ENCODE measurements at regions of chr18 and their contacts with region 1.

Region 1: GRCh38 chr18:35580701-35581539 is 620 bp upstream of the GALNT1 start:
- DNase-seq: peak; percentile 49 to 53 (median 52)
- H3K4me3 ChIP-seq: peak overlapping the region; percentile 46 to 75 (median 70)
- H3K4me3 Mint-ChIP-seq: peak overlapping the region; percentile 76 to 83
- H3K27ac ChIP-seq: peak overlapping the region in 1 of 2 donors; percentile 78
- H3K27ac Mint-ChIP-seq: peak overlapping the region in 3 of 7 donors; percentile 54 to 76 (median 69)
- H3K4me1 ChIP-seq: peaks cover 16 to 24% of the 10 kb centered on the region in 2 donors
- H3K4me1 Mint-ChIP-seq: peaks cover 29% of the 10 kb centered on the region
- H3K27me3 ChIP-seq: peaks cover 0 to 2% of the 10 kb centered on the region in 2 donors
- H3K27me3 Mint-ChIP-seq: peaks cover 0 to 1% (median 1%) of the 10 kb centered on the region in 3 donors
- CTCF ChIP-seq: no peak

Region 2: DNA sequence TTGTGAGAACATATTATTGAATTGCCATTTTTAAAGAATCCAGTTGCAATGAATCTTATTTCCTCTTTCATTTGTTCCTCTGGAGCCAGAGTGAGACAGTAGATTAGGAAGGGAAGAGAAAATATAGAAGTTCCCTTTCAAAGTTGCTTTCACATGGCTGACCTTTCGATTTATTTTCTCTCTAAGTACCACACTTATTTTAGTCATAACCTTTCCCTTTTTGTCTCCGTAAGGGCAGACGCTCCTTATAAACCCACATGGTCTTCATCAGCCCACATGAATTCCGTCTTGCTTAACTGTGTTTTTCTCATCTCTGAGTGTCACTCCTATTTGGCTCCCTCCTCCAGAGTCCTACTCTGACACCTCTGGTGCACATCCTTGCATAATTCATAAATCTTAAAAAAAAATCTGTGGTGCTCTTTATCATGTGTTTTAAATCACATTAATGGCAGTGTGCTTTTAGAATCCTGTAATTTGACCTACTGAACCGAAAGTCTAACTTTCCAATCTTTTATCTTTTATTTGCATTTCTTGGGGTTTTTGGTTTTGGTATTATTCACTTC is 165.3 kb before region 1 on chr18:
- intact Hi-C with region 1: loop called in 1 of 2 experiments (anchors 10 kb)
- DNase-seq: peak; percentile 23 to 51 (median 42)
- H3K4me3 ChIP-seq: peak overlapping the region; percentile 34 to 71 (median 58)
- H3K4me3 Mint-ChIP-seq: peak overlapping the region; percentile 70 to 94
- H3K27ac ChIP-seq: peak overlapping the region in 1 of 2 donors; percentile 80
- H3K27ac Mint-ChIP-seq: peak overlapping the region; percentile 84 to 95 (median 90)
- H3K4me1 ChIP-seq: peaks cover 34 to 41% of the 10 kb centered on the region in 2 donors
- H3K4me1 Mint-ChIP-seq: peaks cover 41% of the 10 kb centered on the region
- H3K27me3 ChIP-seq: no peaks in the 10 kb centered on the region
- H3K27me3 Mint-ChIP-seq: peaks cover 1 to 3% (median 2%) of the 10 kb centered on the region in 3 donors
- CTCF ChIP-seq: no peak

Region 3: GRCh38 chr18:35511428-35511827 is 69.5 kb before region 1 on chr18:
- intact Hi-C with region 1: no loop called
- DNase-seq: no peak
- H3K4me3 ChIP-seq: no peak overlapping the region
- H3K4me3 Mint-ChIP-seq: no peak overlapping the region
- H3K27ac ChIP-seq: no peak overlapping the region
- H3K27ac Mint-ChIP-seq: no peak overlapping the region
- H3K4me1 ChIP-seq: peaks cover 8 to 10% of the 10 kb centered on the region in 2 donors
- H3K4me1 Mint-ChIP-seq: peaks cover 3% of the 10 kb centered on the region
- H3K27me3 ChIP-seq: no peaks in the 10 kb centered on the region
- H3K27me3 Mint-ChIP-seq: peaks cover 0 to 8% (median 0%) of the 10 kb centered on the region in 3 donors
- CTCF ChIP-seq: no peak

Region 4: GRCh38 chr18:35616664-35617423 is 35.9 kb after region 1 on chr18:
- intact Hi-C with region 1: loop called in 1 of 2 experiments (anchors 5 kb)
- DNase-seq: peak; percentile 82 to 90 (median 86)
- H3K4me3 ChIP-seq: peak overlapping the region in 1 of 3 experiments; percentile 2
- H3K4me3 Mint-ChIP-seq: no peak overlapping the region
- H3K27ac ChIP-seq: peak overlapping the region in 1 of 2 donors; percentile 76
- H3K27ac Mint-ChIP-seq: no peak overlapping the region
- H3K4me1 ChIP-seq: peaks cover 15 to 18% of the 10 kb centered on the region in 2 donors
- H3K4me1 Mint-ChIP-seq: peaks cover 12% of the 10 kb centered on the region
- H3K27me3 ChIP-seq: no peaks in the 10 kb centered on the region
- H3K27me3 Mint-ChIP-seq: peaks cover 0 to 2% (median 0%) of the 10 kb centered on the region in 3 donors
- CTCF ChIP-seq: no peak